SK-N-SH (cell line): ENCODE measurements at regions of chr7 and their contacts with region 1.

Region 1: GRCh38 chr7:85829817-85830432 is 643.1 kb upstream of the SEMA3D start:
- DNase-seq: peak; percentile 19
- H3K4me3 ChIP-seq: no peak overlapping the region
- H3K27ac ChIP-seq: no peak overlapping the region
- H3K4me1 ChIP-seq: peaks cover 0 to 2% of the 10 kb centered on the region in 2 experiments; a peak in 1 of 4 replicates
- H3K27me3 ChIP-seq: no peaks in the 10 kb centered on the region
- CTCF ChIP-seq: peak; percentile 88
- EP300 ChIP-seq: no peak
- RAD21 ChIP-seq: peak; percentile 88

Region 2: DNA sequence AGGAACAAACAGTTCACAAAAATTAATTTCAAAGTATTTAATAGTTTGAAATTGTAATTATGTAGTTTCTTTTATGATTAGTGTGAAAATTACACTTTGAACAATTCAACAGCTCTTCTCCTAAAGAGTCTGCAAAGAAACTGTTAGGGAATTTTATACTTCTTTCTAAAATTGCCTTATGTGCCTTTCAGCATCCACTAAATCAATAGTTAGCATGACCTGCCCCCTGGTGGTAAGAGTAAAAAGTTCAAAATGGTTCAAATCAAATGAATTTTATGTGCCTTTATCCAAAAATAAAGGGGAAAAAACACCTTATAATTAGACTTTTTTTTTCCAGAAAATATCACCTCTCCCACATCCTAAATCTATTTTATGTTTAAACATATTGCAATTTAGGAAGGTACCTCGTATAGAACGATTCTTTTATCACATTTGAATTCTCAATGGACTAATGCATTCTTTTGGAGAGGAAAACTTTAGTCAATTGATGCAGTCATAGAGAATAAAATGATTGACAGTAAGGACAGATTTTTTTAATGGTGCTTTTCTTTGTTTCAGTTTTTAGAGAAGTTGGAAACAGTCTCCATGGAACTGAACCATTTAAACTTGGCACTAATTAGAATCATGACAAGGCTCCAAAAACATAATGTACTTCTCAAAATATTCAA is 806.7 kb before region 1 on chr7:
- CTCF ChIA-PET with region 1: interaction called, 98 read pairs
- POLR2A ChIA-PET with region 1: no interaction called
- DNase-seq: no peak
- H3K4me3 ChIP-seq: peak overlapping the region in 1 of 2 experiments; percentile 10; a peak in 1 of 4 replicates
- H3K27ac ChIP-seq: no peak overlapping the region
- H3K4me1 ChIP-seq: peaks cover 0 to 12% of the 10 kb centered on the region in 2 experiments; a peak in 3 of 4 replicates
- H3K27me3 ChIP-seq: no peaks in the 10 kb centered on the region
- CTCF ChIP-seq: peak; percentile 93
- EP300 ChIP-seq: no peak
- RAD21 ChIP-seq: peak; percentile 98

Region 3: GRCh38 chr7:85186521-85187241 is 643.2 kb before region 1 on chr7 and contains the start of gene SEMA3D:
- CTCF ChIA-PET with region 1: interaction called, 24 read pairs
- POLR2A ChIA-PET with region 1: no interaction called
- DNase-seq: peak; percentile 93
- H3K4me3 ChIP-seq: peak within 1 kb of the TSS; percentile 90 to 97
- H3K27ac ChIP-seq: peak within 1 kb of the TSS; percentile 29 to 61; a peak in 3 of 4 replicates
- H3K4me1 ChIP-seq: peaks cover 4 to 26% of the 10 kb centered on the region in 2 experiments; a peak in 3 of 4 replicates
- H3K27me3 ChIP-seq: no peaks in the 10 kb centered on the region
- CTCF ChIP-seq: peak; percentile 98
- EP300 ChIP-seq: no peak; a peak in 1 of 4 replicates
- RAD21 ChIP-seq: peak; percentile 77
- polyA plus RNA-seq, gene SEMA3D: 30.1 and 48.7 TPM in 2 replicates

Region 4: DNA sequence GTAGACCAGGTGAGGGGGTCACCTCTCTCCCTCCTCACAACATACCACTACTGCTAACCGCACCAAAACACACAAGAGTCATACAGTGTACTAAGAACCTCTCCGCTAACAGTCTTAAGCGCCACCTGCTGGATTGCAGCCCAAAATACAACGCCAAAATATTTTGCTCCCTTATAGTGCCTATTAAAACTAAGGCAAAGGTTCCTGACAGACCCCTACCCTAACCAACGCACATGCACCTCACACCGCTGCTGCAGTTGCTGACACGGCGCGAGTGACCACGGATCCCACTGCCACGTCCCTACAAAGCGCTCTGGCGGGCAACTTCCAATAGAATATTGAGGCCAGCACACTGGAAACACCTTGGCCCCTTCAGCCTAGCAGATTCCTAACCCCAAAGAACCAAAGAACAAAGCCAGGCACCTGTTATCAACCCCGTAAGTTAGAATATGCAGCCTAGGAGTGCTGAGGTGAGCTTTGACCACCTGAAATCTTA is 79.4 kb before region 1 on chr7:
- CTCF ChIA-PET with region 1: interaction called, 10 read pairs
- POLR2A ChIA-PET with region 1: no interaction called
- DNase-seq: peak; percentile 49
- H3K4me3 ChIP-seq: no peak overlapping the region; a peak in 1 of 4 replicates
- H3K27ac ChIP-seq: no peak overlapping the region
- H3K4me1 ChIP-seq: no peaks in the 10 kb centered on the region
- H3K27me3 ChIP-seq: no peaks in the 10 kb centered on the region
- CTCF ChIP-seq: peak; percentile 81
- EP300 ChIP-seq: no peak
- RAD21 ChIP-seq: peak; percentile 88

Region 5: DNA sequence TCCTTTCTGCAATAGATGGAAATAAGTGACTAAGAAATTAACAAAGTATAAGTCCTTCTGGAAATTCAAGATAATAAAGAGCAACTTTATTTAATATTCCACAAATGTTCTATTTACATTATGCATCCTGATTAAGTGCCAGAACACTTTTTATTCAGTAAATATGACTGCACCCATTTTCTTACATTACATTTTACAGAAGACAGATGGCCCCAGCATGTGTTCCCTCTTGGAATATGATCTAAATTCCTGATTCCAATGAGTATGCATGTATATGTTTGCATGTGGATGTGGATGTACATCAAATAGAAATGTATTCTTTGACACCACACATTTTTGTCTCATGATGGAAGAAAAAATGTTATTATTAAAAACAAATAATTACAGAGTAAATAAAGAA is 14.4 kb before region 1 on chr7:
- CTCF ChIA-PET with region 1: interaction called, 14 read pairs
- POLR2A ChIA-PET with region 1: no interaction called
- DNase-seq: peak; percentile 31
- H3K4me3 ChIP-seq: no peak overlapping the region
- H3K27ac ChIP-seq: no peak overlapping the region
- H3K4me1 ChIP-seq: no peaks in the 10 kb centered on the region; a peak in 1 of 4 replicates
- H3K27me3 ChIP-seq: no peaks in the 10 kb centered on the region
- CTCF ChIP-seq: no peak
- EP300 ChIP-seq: peak in 1 of 2 experiments; percentile 57; a peak in 1 of 4 replicates
- RAD21 ChIP-seq: no peak

Region 6: GRCh38 chr7:85845616-85846015 is 15.7 kb after region 1 on chr7:
- CTCF ChIA-PET with region 1: interaction called, 27 read pairs
- POLR2A ChIA-PET with region 1: no interaction called
- DNase-seq: no peak
- H3K4me3 ChIP-seq: no peak overlapping the region
- H3K27ac ChIP-seq: no peak overlapping the region
- H3K4me1 ChIP-seq: no peaks in the 10 kb centered on the region
- H3K27me3 ChIP-seq: no peaks in the 10 kb centered on the region
- CTCF ChIP-seq: no peak
- EP300 ChIP-seq: no peak
- RAD21 ChIP-seq: no peak